Cardiac septum (tissue), 1 donor: ENCODE measurements at regions of chr3 and their contacts with region 1.

Region 1: GRCh38 chr3:187679638-187680396 is 9.6 kb upstream of the SST start:
- DNase-seq: peak; percentile 86

Region 2: GRCh38 chr3:187223799-187224198 is 456.0 kb before region 1 on chr3:
- intact Hi-C with region 1: loop called (anchors 2 kb)
- DNase-seq: no peak

Region 3: GRCh38 chr3:187319699-187320302 is 360.0 kb before region 1 on chr3:
- intact Hi-C with region 1: loop called (anchors 1 kb)
- DNase-seq: no peak

Region 4: GRCh38 chr3:187616307-187616972 is 63.4 kb before region 1 on chr3:
- intact Hi-C with region 1: loop called (anchors 5 kb)
- DNase-seq: no peak

Region 5: DNA sequence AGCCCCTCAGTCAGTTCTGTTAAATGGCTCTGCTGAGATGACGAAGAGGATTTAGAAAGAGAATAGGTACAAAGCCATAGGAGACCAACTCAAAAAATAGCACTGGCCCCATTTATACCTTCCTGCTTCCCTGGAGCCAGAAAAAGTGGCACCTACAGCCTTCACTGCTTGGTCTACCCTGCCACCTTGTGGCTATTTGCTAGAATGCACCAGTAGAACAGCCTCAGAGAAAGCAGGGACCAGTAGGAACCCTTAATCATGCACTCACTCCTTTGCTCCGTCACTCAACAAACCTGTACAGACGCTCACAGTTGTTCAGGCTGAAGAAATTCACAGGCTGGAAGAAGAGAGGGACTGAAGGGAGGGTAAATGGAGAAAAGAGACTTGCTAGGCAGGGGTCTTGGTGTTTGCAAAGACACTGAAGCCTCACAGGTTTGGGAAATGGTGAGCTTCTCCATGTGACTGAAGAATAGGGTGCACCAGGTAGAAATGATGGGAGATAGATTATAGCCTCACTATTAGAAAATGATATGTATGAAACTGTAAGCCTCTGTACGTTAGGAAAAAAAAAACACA is 34.7 kb after region 1 on chr3:
- intact Hi-C with region 1: loop called (anchors 2 kb)
- DNase-seq: no peak

Region 6: DNA sequence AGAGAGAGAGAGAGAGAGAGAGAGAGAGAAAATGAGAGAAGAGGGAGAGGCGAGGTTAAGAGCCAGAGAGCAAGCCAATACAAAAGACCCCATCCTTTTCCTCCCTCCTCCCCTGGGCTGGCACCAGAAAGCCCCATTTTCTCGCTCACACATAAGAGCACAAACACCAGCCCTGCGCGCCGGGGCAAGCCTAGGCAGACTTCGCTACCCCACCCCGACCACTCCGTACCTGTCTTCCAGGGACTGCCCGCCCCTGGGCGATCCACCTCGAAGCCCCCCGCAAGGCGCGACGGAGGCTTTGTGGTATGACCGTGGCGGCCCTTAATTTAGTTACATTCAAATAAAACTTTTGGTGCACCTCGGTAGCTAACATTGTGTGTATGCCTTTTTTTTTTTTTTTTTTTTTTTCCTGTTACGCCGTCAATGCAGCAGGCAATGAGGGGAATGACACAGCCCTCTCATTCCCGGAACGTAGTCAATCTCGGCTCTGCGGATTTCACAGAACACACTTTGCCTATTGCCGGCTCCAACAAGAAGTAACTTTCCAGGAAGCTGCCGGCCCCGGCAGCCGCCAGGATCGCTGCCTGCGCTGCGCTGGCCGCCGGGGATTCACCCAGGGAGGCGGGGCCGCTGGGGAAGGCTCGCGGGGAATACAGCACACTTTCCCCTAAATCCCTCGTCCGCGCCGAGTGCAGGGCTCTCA is 57.7 kb after region 1 on chr3:
- intact Hi-C with region 1: no loop called
- DNase-seq: peak; percentile 90